T-cell (primary cell): ENCODE measurements at regions of chr1 and their contacts with region 1.

Region 1: DNA sequence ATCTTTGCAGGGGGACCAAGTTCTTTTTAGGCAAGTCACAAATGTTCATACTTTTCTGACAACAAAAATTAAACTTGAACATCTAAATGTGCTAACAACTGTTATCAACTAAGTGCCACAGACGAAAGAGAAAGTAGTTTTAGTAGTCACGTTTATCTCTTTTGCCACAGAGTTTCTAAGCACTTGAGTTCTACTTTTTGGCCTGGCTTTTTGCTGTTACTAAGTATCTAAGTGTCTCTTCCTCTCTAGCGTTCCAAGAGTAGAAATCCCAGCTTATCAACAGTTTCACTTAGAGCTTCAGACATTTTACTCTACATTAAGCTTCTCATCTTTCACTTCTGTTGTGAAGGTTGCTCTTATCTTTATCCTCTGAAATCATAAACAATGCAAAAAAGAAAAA is 34.2 kb downstream of the GATAD2B start:
- DNase-seq: peak in 1 of 35 experiments; percentile 22
- ATAC-seq: no peak
- H3K4me3 ChIP-seq: no peak overlapping the region
- H3K4me3 Mint-ChIP-seq: peak overlapping the region in 2 of 3 donors; percentile 21 to 50
- H3K27ac ChIP-seq: peak overlapping the region; percentile 1
- H3K27ac Mint-ChIP-seq: peak overlapping the region; percentile 24 to 80
- H3K4me1 ChIP-seq: peaks cover 9 to 13% of the 10 kb centered on the region in 2 experiments
- H3K4me1 Mint-ChIP-seq: peaks cover 54 to 58% (median 57%) of the 10 kb centered on the region in 3 donors
- H3K27me3 ChIP-seq: no peaks in the 10 kb centered on the region
- H3K27me3 Mint-ChIP-seq: no peaks in the 10 kb centered on the region

Region 2: GRCh38 chr1:153734396-153735089 is 154.0 kb before region 1 on chr1:
- CTCF ChIA-PET with region 1: no interaction called
- POLR2A ChIA-PET with region 1: interaction called in 1 of 2 experiments, 14 read pairs
- DNase-seq: no peak
- ATAC-seq: no peak
- H3K4me3 ChIP-seq: no peak overlapping the region
- H3K4me3 Mint-ChIP-seq: no peak overlapping the region
- H3K27ac ChIP-seq: no peak overlapping the region
- H3K27ac Mint-ChIP-seq: no peak overlapping the region
- H3K4me1 ChIP-seq: peaks cover 4 to 6% of the 10 kb centered on the region in 2 experiments
- H3K4me1 Mint-ChIP-seq: peaks cover 11 to 36% (median 30%) of the 10 kb centered on the region in 3 donors
- H3K27me3 ChIP-seq: no peaks in the 10 kb centered on the region
- H3K27me3 Mint-ChIP-seq: no peaks in the 10 kb centered on the region

Region 3: DNA sequence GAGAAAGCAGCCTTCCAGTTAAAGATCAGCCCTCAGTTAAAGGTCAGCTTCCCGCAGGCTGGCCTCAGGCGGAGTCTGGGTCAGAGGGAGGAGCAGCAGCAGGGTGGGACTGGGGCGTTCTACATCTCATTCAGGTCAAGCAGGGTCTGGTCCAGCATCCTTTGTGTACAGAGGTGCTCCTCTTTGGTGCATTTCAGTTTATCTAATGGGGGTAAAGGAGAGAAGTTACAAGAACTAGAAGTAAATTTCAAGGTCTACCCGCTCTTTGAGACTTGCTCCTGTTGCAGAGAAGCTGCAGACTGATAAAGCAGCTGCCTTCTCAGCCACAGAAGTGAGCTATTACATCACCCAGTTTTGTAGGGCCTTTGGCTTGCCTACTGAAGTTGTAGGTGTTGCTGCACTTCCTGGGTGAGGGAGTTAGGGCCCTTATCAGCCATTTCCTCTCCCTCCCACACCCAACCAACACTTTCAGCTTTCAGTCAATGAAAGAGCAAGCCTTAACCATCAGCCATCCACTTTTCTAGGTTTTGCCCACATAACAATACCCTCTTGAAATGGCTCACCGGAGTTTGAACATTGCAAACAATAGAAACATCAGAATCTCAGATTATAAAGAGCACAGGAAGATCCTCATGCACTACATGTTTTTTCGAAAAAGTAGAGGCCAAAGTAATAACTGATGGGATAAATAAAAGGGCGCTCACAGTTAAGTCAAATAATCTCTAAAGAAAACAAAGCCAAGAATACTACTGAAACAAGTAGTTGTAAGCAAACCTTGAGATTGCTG is 269.2 kb after region 1 on chr1:
- CTCF ChIA-PET with region 1: no interaction called
- POLR2A ChIA-PET with region 1: no interaction called
- DNase-seq: peak; percentile 38 to 89 (median 73)
- ATAC-seq: peak; percentile 99
- H3K4me3 ChIP-seq: no peak overlapping the region
- H3K4me3 Mint-ChIP-seq: peak overlapping the region; percentile 57 to 72 (median 67)
- H3K27ac ChIP-seq: peak overlapping the region; percentile 77
- H3K27ac Mint-ChIP-seq: peak overlapping the region; percentile 97 to 98
- H3K4me1 ChIP-seq: peaks cover 53 to 60% of the 10 kb centered on the region in 2 experiments
- H3K4me1 Mint-ChIP-seq: peaks cover 64 to 71% (median 70%) of the 10 kb centered on the region in 3 donors
- H3K27me3 ChIP-seq: no peaks in the 10 kb centered on the region
- H3K27me3 Mint-ChIP-seq: no peaks in the 10 kb centered on the region